ENCODE measurements at regions of chr5 and their contacts with region 1.

Region 1: DNA sequence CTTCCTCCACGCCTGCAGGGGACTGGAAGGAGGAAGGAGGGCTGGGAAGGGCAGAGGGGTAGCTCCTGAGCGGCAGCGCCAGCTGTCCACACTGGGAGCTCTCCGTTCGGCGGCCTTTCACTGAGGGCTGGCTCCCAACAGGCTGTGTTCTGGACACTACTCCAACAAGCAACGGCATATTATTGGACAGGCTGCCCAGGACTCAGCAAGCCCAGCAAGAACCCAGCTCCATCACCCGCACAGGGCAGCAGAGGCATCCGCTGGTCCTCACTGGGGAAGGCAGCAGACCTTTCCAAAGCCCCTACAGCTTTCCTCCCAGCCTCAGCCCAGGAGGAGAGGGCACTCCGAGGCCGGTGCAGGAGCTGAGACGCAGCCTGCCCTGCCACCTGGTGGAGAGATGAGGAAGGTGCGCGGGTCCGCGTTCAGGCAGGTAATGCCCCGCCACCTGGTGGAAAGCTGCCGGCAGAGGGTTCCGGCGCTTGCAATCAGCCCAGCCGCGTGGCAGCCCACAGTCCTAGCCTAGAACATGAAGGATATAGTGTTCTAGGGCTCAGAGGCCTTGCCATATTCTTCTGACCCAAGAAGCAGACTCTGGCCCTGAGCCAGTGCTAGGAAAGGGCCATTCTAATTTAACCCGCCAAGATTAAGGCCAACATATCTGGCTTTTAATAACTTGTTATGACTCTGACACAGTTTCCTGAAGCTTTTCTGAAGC is 74.4 kb downstream of the NRG2 start:
- DNase-seq: peak; percentile 72
- ATAC-seq: peak; percentile 99
- H3K4me3 ChIP-seq: no peak overlapping the region
- H3K27ac ChIP-seq: no peak overlapping the region
- H3K4me1 ChIP-seq: peaks cover 2 to 7% of the 10 kb centered on the region in 2 experiments; a peak in 2 of 4 replicates
- H3K27me3 ChIP-seq: no peaks in the 10 kb centered on the region
- CTCF ChIP-seq: peak; percentile 100
- POLR2A ChIP-seq: no peak
- RAD21 ChIP-seq: peak; percentile 100

Region 2: DNA sequence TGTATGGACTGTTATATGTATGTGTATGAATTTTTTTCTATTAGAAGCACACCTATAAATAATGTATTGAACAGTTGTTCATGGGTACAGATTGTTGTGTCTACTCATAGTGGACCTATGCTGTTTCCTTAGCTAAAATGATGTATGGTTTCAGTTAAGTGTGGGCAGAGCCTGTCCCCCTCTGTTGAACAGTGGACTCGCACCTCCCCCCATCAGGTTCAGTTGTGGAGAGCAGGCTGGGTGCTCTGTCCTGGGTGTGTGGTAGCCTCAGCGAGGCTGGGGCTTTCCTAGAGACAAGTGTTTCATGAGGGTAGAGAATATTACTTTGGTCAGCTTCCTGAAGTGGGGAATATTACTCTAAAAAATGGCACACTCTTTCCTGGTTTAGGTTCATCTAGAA is 1046.2 kb before region 1 on chr5:
- CTCF ChIA-PET with region 1: no interaction called
- POLR2A ChIA-PET with region 1: no interaction called
- RAD21 ChIA-PET with region 1: no interaction called
- intact Hi-C with region 1: no loop called
- DNase-seq: no peak
- ATAC-seq: no peak
- H3K4me3 ChIP-seq: no peak overlapping the region
- H3K27ac ChIP-seq: no peak overlapping the region
- H3K4me1 ChIP-seq: peaks cover 0 to 6% of the 10 kb centered on the region in 2 experiments; a peak in 1 of 4 replicates
- H3K27me3 ChIP-seq: no peaks in the 10 kb centered on the region
- CTCF ChIP-seq: no peak
- POLR2A ChIP-seq: no peak
- RAD21 ChIP-seq: no peak

Region 3: GRCh38 chr5:139177809-139178588 is 790.7 kb before region 1 on chr5:
- CTCF ChIA-PET with region 1: no interaction called
- POLR2A ChIA-PET with region 1: no interaction called
- RAD21 ChIA-PET with region 1: no interaction called
- intact Hi-C with region 1: no loop called
- DNase-seq: no peak
- ATAC-seq: no peak
- H3K4me3 ChIP-seq: no peak overlapping the region
- H3K27ac ChIP-seq: no peak overlapping the region
- H3K4me1 ChIP-seq: peaks cover 14 to 21% of the 10 kb centered on the region in 2 experiments
- H3K27me3 ChIP-seq: no peaks in the 10 kb centered on the region
- CTCF ChIP-seq: no peak
- POLR2A ChIP-seq: no peak
- RAD21 ChIP-seq: no peak

Region 4: DNA sequence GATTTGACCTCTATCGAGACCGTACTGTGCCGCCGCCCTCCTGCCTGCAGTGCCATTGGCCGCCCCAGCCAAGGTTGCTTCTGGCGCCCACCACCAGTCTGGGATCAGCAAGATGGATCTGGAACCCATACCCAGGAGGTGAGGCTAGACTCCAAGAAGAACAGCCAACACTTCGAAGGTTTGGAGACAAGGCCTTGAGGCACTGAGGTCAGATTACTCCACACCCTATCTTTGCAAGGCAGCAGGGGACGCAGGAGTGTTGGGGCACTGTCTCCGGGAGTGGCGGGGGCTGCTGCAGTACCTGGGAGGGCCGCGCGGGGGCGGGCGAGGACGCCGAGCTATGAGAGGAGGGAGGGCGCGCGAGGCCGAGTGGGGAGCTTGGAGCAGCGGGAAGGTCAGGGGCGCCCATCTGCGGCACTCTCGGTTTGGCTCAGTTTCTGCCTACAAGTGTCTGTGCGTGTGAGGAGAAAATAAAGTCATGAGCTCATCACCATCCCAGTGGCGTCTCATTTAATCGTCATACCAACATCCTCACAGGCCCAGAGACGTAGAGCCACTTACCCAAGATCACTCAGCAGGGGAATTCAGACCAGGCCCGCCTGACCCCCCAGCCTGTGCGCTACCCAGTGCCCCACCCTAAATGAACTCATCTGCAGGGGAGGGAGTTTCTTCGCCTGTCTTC is 193.6 kb before region 1 on chr5:
- CTCF ChIA-PET with region 1: interaction called, 26 read pairs
- POLR2A ChIA-PET with region 1: no interaction called
- RAD21 ChIA-PET with region 1: interaction called in 1 of 2 experiments, 3 read pairs
- intact Hi-C with region 1: no loop called
- DNase-seq: no peak
- ATAC-seq: peak; percentile 98
- H3K4me3 ChIP-seq: no peak overlapping the region
- H3K27ac ChIP-seq: no peak overlapping the region
- H3K4me1 ChIP-seq: peaks cover 0 to 9% of the 10 kb centered on the region in 2 experiments; a peak in 1 of 4 replicates
- H3K27me3 ChIP-seq: no peaks in the 10 kb centered on the region
- CTCF ChIP-seq: peak; percentile 95 to 97 (median 96)
- POLR2A ChIP-seq: no peak
- RAD21 ChIP-seq: peak; percentile 76

Region 5: GRCh38 chr5:139844472-139845145 is 124.1 kb before region 1 on chr5:
- CTCF ChIA-PET with region 1: interaction called, 18 read pairs
- POLR2A ChIA-PET with region 1: no interaction called
- RAD21 ChIA-PET with region 1: no interaction called
- intact Hi-C with region 1: loop called (anchors 1 kb)
- DNase-seq: peak; percentile 79
- ATAC-seq: peak; percentile 74
- H3K4me3 ChIP-seq: no peak overlapping the region
- H3K27ac ChIP-seq: no peak overlapping the region
- H3K4me1 ChIP-seq: peaks cover 0 to 13% of the 10 kb centered on the region in 2 experiments; a peak in 2 of 4 replicates
- H3K27me3 ChIP-seq: no peaks in the 10 kb centered on the region
- CTCF ChIP-seq: peak; percentile 92 to 96 (median 95)
- POLR2A ChIP-seq: no peak
- RAD21 ChIP-seq: peak; percentile 88

Region 6: GRCh38 chr5:139881143-139881733 is 87.5 kb before region 1 on chr5:
- CTCF ChIA-PET with region 1: interaction called, 16 read pairs
- POLR2A ChIA-PET with region 1: no interaction called
- RAD21 ChIA-PET with region 1: no interaction called
- intact Hi-C with region 1: no loop called
- DNase-seq: no peak
- ATAC-seq: no peak
- H3K4me3 ChIP-seq: no peak overlapping the region
- H3K27ac ChIP-seq: no peak overlapping the region
- H3K4me1 ChIP-seq: peaks cover 20 to 43% of the 10 kb centered on the region in 2 experiments
- H3K27me3 ChIP-seq: no peaks in the 10 kb centered on the region
- CTCF ChIP-seq: peak in 1 of 3 experiments; percentile 25; a peak in 1 of 6 replicates
- POLR2A ChIP-seq: no peak
- RAD21 ChIP-seq: no peak

Region 7: GRCh38 chr5:139985733-139986132 is 17.0 kb after region 1 on chr5:
- CTCF ChIA-PET with region 1: interaction called, 38 read pairs
- POLR2A ChIA-PET with region 1: interaction called, 6 read pairs
- RAD21 ChIA-PET with region 1: interaction called, 3 to 4 read pairs
- intact Hi-C with region 1: no loop called
- DNase-seq: peak; percentile 78
- ATAC-seq: peak; percentile 93
- H3K4me3 ChIP-seq: peak overlapping the region; percentile 11 to 40; a peak in 3 of 4 replicates
- H3K27ac ChIP-seq: peak overlapping the region; percentile 56
- H3K4me1 ChIP-seq: peaks cover 20 to 45% of the 10 kb centered on the region in 2 experiments
- H3K27me3 ChIP-seq: no peaks in the 10 kb centered on the region
- CTCF ChIP-seq: no peak
- POLR2A ChIP-seq: no peak
- RAD21 ChIP-seq: no peak

Region 8: DNA sequence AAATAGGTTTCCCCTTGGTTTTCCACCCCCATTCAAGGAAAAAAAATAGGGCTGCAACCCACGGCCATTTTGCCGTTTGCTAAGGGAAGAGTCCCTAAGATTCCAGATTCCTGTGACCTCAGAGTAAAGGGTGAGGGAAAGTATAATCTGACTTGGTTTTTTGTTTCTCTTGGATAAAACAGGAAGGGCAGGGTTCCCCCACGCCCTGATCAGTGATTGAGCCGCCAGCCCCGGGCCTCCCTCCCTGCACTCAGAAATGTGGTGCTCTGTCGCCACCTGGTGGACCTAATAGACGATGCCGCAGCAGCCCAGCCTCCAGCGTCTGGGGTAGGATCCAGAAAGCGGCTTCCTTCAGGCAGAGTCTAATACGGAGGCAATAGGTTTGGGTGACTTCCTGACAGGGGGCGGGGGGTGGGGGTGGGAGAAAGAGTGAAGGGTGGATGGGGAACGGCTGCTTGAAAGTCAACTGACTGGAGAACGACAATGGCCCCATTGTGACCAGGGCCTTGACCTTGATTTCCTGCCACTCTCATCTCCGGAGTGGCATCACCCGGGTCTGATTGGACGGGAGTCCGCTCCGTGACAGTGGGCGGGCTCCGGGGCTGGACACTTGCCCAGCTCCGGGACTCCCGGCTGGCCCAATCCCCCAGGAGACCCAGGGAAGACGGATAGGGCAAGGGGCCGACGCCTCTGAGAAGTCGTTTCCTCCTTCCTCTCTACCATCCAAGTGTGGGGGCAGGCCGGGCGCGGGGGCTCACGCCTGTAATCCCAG is 188.5 kb after region 1 on chr5:
- CTCF ChIA-PET with region 1: interaction called, 4 read pairs
- POLR2A ChIA-PET with region 1: no interaction called
- RAD21 ChIA-PET with region 1: interaction called in 1 of 2 experiments, 3 read pairs
- intact Hi-C with region 1: loop called (anchors 2 kb)
- DNase-seq: peak; percentile 70
- ATAC-seq: peak; percentile 96
- H3K4me3 ChIP-seq: peak overlapping the region; percentile 15 to 41
- H3K27ac ChIP-seq: no peak overlapping the region; the same call in 1 of the 2 replicates
- H3K4me1 ChIP-seq: peaks cover 6 to 18% of the 10 kb centered on the region in 2 experiments; a peak in 3 of 4 replicates
- H3K27me3 ChIP-seq: no peaks in the 10 kb centered on the region
- CTCF ChIP-seq: peak; percentile 87 to 95 (median 90)
- POLR2A ChIP-seq: no peak
- RAD21 ChIP-seq: peak; percentile 98

Region 9: DNA sequence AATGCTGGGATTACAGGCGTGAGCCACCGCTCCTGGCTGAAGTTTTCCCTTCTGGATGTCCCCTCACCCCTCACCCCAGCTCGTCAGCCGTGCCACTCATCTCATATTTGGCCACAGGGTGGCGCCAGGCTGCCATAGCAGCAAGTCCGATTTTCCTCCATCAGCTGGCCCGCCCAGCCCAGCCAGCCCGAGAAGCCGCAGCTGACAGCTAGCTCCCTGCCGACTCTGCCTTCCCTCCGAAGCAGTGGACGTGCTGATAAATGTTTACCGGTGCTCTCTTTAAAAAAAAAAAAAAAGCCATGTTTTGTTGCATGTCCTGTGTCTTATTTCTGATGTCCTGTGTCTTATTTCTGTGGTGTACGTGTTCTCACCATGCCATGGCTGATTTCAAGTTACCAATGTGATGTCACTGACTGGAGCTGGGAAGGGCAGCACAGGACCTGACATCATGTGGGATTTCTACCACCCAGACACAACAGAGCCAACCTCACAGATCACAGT is 275.9 kb after region 1 on chr5:
- CTCF ChIA-PET with region 1: no interaction called
- POLR2A ChIA-PET with region 1: no interaction called
- RAD21 ChIA-PET with region 1: no interaction called
- intact Hi-C with region 1: no loop called
- DNase-seq: no peak
- ATAC-seq: peak; percentile 63
- H3K4me3 ChIP-seq: no peak overlapping the region
- H3K27ac ChIP-seq: no peak overlapping the region
- H3K4me1 ChIP-seq: peaks cover 25 to 33% of the 10 kb centered on the region in 2 experiments
- H3K27me3 ChIP-seq: no peaks in the 10 kb centered on the region
- CTCF ChIP-seq: peak in 2 of 3 experiments; percentile 72 to 81; a peak in 4 of 6 replicates
- POLR2A ChIP-seq: no peak
- RAD21 ChIP-seq: no peak

Measured in HCT116 (cell line).